AG04450 (cell line): ENCODE measurements at regions of chr5 and their contacts with region 1.

Region 1: DNA sequence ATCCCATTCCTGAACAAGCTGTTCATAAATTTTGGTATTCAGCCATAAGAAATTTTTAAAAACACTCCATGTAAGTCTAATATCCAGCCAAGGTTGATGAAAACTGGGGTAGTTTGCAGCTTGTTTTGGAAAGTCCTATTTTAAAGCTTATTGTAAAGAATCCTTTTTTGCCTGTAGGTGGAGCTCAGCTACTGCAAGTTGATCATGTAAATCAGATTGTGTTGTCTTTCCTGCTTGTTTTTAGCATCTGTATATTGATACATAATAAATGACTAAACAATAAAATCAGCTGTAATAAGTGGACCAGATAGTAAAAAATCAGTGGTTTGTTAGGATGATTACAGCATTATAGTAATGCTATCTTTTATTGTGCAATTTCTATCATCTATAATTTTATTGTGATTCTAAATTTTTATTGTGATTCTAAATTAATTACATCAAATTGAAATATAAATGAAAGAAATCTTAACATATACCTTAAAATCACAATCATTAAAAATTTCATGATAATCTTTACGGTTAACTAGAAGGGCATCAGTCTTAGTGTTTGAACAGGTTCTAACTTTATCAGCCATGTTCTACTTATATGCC is 42.4 kb downstream of the CWC27 start:
- DNase-seq: peak; percentile 27
- H3K4me3 ChIP-seq: no peak overlapping the region
- H3K27ac ChIP-seq: no peak overlapping the region
- H3K27me3 ChIP-seq: no peaks in the 10 kb centered on the region
- CTCF ChIP-seq: peak; percentile 75

Region 2: DNA sequence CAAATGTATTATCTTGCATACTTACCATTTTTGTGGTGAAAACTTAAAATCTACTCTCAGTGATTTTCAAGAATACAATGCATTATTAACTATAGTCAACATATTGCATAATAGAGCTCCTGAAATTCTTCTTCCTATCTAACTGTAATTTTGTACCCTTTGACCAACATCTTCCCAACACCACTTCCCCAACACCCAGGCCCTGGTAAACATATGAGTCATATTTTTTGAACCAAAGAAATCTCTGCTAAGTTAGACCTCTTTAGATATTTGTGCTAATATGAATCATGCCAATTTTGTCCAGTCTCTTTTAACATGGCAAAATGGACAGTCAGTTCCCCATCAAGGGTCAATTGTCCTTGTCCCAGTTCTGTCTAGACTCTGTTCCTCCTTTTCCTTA is 323.9 kb before region 1 on chr5:
- CTCF ChIA-PET with region 1: no interaction called
- POLR2A ChIA-PET with region 1: no interaction called
- DNase-seq: no peak
- H3K4me3 ChIP-seq: no peak overlapping the region
- H3K27ac ChIP-seq: no peak overlapping the region
- H3K27me3 ChIP-seq: no peaks in the 10 kb centered on the region
- CTCF ChIP-seq: no peak

Region 3: DNA sequence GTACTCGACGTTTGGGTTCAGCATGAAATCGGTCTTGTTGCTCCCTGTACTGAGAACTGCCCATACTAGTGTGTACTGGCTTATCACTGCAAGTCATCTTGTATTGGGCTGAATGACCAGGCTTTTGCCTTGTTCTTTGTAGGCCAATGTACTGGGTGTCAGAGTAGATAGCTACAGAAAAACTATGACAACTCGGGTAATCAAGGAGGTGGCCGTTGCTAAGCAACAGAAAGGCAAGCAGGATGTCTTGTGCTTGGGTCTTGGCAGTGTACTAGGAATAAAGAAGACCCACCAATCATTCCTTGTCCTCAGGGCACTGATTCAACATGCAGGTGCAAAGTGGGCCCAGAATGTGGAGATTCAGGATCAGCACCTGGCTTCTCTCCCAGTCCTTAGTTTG is 132.8 kb before region 1 on chr5:
- CTCF ChIA-PET with region 1: no interaction called
- POLR2A ChIA-PET with region 1: no interaction called
- DNase-seq: no peak
- H3K4me3 ChIP-seq: no peak overlapping the region
- H3K27ac ChIP-seq: no peak overlapping the region
- H3K27me3 ChIP-seq: no peaks in the 10 kb centered on the region
- CTCF ChIP-seq: no peak

Region 4: GRCh38 chr5:64826541-64826940 is 15.4 kb after region 1 on chr5:
- CTCF ChIA-PET with region 1: interaction called, 14 read pairs
- POLR2A ChIA-PET with region 1: no interaction called
- DNase-seq: no peak
- H3K4me3 ChIP-seq: no peak overlapping the region
- H3K27ac ChIP-seq: no peak overlapping the region
- H3K27me3 ChIP-seq: no peaks in the 10 kb centered on the region
- CTCF ChIP-seq: no peak

Region 5: DNA sequence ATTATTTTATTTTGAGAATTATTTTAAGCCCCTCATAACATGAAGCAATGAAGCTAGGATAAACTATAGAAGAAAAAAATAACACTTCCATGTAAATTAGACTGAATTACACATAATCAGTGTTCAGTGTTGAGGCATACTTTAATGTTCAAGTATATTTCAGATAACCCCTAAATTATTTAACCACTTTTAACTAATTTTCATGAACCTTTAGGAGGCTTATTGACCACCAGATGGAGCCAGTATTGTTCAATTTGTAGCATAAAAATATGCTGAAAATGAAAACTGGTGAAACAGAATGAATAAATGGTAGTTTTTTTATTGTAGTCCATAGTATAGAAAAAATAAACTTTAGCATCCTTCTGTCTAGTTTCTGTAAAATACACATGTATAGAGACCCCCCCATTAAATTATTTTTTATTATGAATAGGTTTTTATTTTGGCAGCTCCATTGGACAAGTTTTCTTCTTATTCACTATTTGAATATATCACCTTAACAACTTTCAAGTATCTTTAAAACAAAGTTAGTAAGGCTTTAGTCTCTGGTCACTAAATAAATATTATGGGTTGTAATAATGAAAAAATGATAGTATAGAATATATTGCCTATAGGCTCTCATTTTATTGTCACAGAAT is 147.7 kb after region 1 on chr5:
- CTCF ChIA-PET with region 1: interaction called, 21 read pairs
- POLR2A ChIA-PET with region 1: no interaction called
- DNase-seq: peak; percentile 13
- H3K4me3 ChIP-seq: no peak overlapping the region
- H3K27ac ChIP-seq: no peak overlapping the region
- H3K27me3 ChIP-seq: no peaks in the 10 kb centered on the region
- CTCF ChIP-seq: peak; percentile 73

Region 6: GRCh38 chr5:65102828-65103711 is 291.9 kb after region 1 on chr5:
- CTCF ChIA-PET with region 1: interaction called, 12 read pairs
- POLR2A ChIA-PET with region 1: no interaction called
- DNase-seq: no peak
- H3K4me3 ChIP-seq: 0 out of 2 replicates have a peak overlapping the region, but pooled peaks have one; percentile 4
- H3K27ac ChIP-seq: peak overlapping the region; percentile 82
- H3K27me3 ChIP-seq: no peaks in the 10 kb centered on the region
- CTCF ChIP-seq: no peak

Region 7: DNA sequence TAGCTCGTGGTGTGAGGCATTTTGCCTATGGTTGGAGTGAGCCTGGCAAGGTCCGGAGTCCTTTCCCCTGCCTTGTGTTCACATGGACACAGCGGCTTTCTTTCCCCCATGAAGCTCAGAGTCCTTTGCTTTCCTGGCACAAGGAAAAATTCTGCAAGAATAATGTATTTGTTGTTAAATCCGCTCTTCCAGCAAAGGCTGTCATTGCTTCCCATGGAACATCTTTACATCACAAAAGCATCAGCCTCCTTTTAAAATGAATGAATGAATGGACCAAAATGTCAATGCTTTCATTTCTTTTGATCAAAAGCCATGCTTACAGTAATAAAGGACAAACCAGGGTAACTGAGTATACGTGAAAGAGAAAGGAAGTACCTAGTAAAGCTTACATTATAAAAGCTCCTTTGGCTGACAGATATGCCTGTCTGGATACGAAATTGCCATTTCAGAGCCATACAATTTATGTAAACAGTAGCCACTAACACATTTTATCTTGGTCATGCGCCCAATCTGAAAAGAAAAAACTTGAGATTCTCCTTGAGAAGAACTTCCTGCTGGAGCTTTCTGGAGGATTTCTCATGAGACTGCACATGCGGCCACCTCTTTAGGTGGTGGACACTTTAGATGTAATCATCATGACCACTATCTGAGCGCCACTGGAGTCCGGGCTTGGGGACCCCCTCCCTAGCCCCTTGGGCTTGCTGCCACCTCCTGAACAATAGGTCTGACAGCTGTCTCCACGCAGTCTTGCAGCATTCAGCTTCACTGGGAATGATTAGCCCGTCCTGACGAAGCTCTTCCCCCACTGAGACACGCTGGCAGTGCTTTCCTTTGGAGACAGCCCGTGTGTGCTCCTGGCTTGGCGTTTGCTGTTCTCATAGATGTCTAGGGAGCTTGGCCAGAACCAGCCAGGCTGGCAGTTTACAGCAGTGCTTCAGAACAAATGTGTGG is 314.7 kb after region 1 on chr5:
- CTCF ChIA-PET with region 1: interaction called, 13 read pairs
- POLR2A ChIA-PET with region 1: no interaction called
- DNase-seq: no peak
- H3K4me3 ChIP-seq: no peak overlapping the region
- H3K27ac ChIP-seq: peak overlapping the region; percentile 99
- H3K27me3 ChIP-seq: no peaks in the 10 kb centered on the region
- CTCF ChIP-seq: no peak